ENCODE measurements at regions of chr2 and their contacts with region 1.

Region 1: GRCh38 chr2:88590998-88591613 is 36.2 kb downstream of the EIF2AK3 start:
- DNase-seq: no peak
- ATAC-seq: peak; percentile 87

Region 2: GRCh38 chr2:88666576-88666975 is 75.5 kb after region 1 on chr2:
- intact Hi-C with region 1: loop called (anchors 2 kb)
- DNase-seq: no peak
- ATAC-seq: no peak

Region 3: GRCh38 chr2:88671786-88672427 is 80.8 kb after region 1 on chr2:
- intact Hi-C with region 1: loop called (anchors 2 kb)
- DNase-seq: no peak
- ATAC-seq: peak; percentile 80

Region 4: GRCh38 chr2:88765154-88765900 is 174.2 kb after region 1 on chr2:
- intact Hi-C with region 1: no loop called
- DNase-seq: peak; percentile 42
- ATAC-seq: no peak

Measured in Right ventricle myocardium superior (tissue), 1 donor.